MCF 10A (cell line): ENCODE measurements at regions of chr7 and their contacts with region 1.

Region 1: DNA sequence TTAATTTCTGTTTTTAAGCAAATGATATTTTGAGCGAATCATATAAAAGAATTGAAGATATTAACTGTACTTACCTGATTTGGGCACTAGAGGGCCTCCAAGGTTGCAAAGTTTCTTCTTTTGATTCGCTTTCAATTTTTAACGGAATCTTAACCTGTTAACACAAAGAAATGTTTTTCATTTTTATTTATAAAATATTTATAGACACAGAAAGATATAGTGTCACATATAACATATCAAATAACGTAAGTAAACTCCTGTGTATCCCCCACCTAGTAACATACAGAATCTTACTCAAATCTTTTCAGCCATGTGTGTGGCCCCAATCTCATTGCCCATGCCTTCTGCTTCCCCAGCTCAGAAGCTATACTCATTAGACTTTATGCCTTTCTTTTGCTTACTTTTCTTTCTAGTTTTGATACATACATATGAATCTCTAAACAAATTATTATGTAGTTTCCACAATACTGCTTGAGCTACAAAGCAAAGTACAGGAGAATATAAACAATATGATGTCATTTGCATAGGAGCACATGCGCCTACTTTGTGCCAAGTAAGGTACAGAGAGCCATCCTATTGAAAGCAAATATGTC is 49.5 kb upstream of the ZPBP start:
- DNase-seq: peak; percentile 53
- H3K4me3 Mint-ChIP-seq: no peak overlapping the region
- H3K27ac Mint-ChIP-seq: no peak overlapping the region
- H3K4me1 Mint-ChIP-seq: no peaks in the 10 kb centered on the region
- H3K27me3 Mint-ChIP-seq: peaks cover 40% of the 10 kb centered on the region
- CTCF ChIP-seq: peak; percentile 51

Region 2: DNA sequence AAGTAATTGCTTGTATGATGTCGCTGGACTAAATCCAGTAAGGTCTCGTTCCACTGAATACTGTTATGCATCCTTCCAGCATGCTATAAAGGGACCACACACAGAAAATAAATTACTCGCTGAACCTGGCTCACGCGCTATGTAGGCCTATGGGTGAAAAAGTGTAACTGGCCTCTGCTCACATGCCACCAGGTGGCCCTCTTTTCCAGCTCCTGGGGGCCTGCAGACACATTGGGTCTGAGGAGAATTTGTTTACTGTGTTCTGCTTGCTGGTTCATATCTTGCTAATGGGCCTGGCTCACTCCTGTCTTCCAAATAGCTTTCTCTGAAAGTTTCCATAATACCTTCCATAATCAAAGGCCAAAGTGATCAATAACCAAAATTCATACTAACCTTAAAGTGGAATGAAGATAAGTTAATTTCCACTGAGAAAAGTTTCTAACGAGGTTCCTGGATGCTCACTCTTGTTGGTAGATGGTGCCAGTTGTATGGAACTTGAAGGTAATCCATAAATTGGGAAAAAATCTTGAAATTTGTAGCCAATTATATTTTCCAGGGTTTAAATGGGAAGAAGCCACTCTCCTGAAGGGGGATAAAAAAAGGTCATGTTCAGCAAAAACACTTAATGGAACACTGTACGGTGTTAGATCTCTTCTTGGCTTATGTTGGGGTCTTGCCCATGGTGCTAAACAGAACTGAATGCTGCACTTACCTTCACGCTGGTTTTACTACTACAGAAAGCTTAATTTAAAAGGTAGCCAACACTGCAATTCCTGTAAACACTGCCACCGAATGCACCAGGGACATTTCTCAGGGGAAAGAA is 22.5 kb before region 1 on chr7:
- CTCF ChIA-PET with region 1: no interaction called
- POLR2A ChIA-PET with region 1: no interaction called
- intact Hi-C with region 1: no loop called
- DNase-seq: peak; percentile 20
- H3K4me3 Mint-ChIP-seq: no peak overlapping the region
- H3K27ac Mint-ChIP-seq: no peak overlapping the region
- H3K4me1 Mint-ChIP-seq: no peaks in the 10 kb centered on the region
- H3K27me3 Mint-ChIP-seq: peaks cover 58% of the 10 kb centered on the region
- CTCF ChIP-seq: no peak

Region 3: GRCh38 chr7:50212666-50213621 is 70.4 kb after region 1 on chr7:
- CTCF ChIA-PET with region 1: no interaction called
- POLR2A ChIA-PET with region 1: no interaction called
- intact Hi-C with region 1: no loop called
- DNase-seq: no peak
- H3K4me3 Mint-ChIP-seq: no peak overlapping the region
- H3K27ac Mint-ChIP-seq: no peak overlapping the region
- H3K4me1 Mint-ChIP-seq: no peaks in the 10 kb centered on the region
- H3K27me3 Mint-ChIP-seq: peaks cover 63% of the 10 kb centered on the region
- CTCF ChIP-seq: no peak

Region 4: DNA sequence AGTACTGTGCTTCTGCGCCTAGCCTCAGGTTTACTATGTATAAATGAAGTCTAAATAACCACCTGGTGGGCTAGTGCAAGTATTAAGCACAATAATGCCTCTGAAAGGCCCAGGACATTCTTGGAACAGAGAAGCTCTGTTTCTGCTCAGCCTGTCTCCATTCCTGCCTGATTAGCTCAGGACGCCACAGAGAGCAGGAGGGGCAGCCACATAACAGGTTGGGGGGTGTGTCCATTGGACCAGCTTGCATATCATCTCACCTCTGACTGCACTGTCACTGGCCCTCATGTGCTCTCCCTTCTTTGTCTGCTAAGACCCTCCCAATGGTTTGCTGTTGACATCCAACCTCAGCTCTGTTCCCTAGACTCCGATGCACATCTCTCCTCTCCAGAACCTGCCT is 109.2 kb after region 1 on chr7:
- CTCF ChIA-PET with region 1: no interaction called
- POLR2A ChIA-PET with region 1: no interaction called
- intact Hi-C with region 1: no loop called
- DNase-seq: no peak
- H3K4me3 Mint-ChIP-seq: no peak overlapping the region
- H3K27ac Mint-ChIP-seq: no peak overlapping the region
- H3K4me1 Mint-ChIP-seq: no peaks in the 10 kb centered on the region
- H3K27me3 Mint-ChIP-seq: peaks cover 80% of the 10 kb centered on the region
- CTCF ChIP-seq: no peak

Region 5: DNA sequence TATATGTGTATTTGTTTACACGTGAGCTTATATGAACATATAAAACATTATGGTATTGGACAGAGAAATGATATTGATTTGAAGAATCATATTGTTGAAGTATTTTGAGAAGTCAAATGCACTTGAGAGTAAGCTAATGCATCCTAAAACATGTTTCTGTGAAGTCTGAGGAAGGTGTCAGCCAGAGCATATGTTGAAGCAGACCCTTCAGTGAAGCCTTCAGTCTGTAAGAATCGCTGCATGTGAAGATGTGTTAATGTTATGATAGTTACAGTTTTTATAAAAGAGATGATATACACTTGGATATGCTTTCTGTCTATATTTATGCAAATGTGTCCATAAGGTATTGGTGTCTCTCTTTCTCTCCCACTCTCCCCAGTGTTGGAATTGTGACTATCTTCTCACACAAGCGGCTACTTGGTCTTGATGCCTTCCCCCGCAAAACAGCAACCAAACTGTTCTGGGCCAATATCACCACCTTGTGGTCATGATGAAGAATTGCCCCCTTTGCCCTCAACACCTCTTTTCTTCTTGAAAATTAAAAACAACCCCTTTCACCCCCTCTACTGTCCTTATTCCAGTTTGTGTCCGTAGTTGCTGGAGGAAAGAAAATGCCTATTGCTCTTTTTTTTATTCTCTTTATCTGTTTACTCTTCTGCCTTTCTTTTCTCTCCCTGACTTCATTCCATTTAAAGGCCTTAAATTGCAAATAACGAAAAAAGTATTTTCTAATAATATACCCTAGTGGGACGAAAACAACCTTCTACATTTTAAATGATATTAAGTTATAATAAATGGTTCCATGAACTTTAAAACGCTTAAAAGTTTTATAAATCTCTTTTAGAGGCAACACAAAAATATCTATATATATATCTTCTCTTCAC is 226.9 kb after region 1 on chr7:
- CTCF ChIA-PET with region 1: interaction called, 4 read pairs
- POLR2A ChIA-PET with region 1: no interaction called
- intact Hi-C with region 1: loop called (anchors 2 kb)
- DNase-seq: peak; percentile 43
- H3K4me3 Mint-ChIP-seq: no peak overlapping the region
- H3K27ac Mint-ChIP-seq: no peak overlapping the region
- H3K4me1 Mint-ChIP-seq: no peaks in the 10 kb centered on the region
- H3K27me3 Mint-ChIP-seq: peaks cover 51% of the 10 kb centered on the region
- CTCF ChIP-seq: peak; percentile 48

Region 6: GRCh38 chr7:50449881-50450589 is 307.5 kb after region 1 on chr7 and contains the start of gene FIGNL1:
- CTCF ChIA-PET with region 1: interaction called, 10 read pairs
- POLR2A ChIA-PET with region 1: no interaction called
- intact Hi-C with region 1: no loop called
- DNase-seq: peak; percentile 73
- H3K4me3 Mint-ChIP-seq: peak within 1 kb of the TSS; percentile 92
- H3K27ac Mint-ChIP-seq: peak within 1 kb of the TSS; percentile 59
- H3K4me1 Mint-ChIP-seq: peaks cover 22% of the 10 kb centered on the region
- H3K27me3 Mint-ChIP-seq: no peaks in the 10 kb centered on the region
- CTCF ChIP-seq: no peak
- total RNA-seq, gene FIGNL1: 10.7 and 14.5 TPM in 2 replicates